ENCODE measurements at regions of chr4 and their contacts with region 1.

Region 1: GRCh38 chr4:87150498-87151261 is 69.7 kb downstream of the KLHL8 start:
- DNase-seq: peak in 1 of 2 experiments; percentile 64
- H3K4me3 ChIP-seq: no peak overlapping the region
- H3K27ac ChIP-seq: no peak overlapping the region
- H3K4me1 ChIP-seq: peaks cover 0 to 3% (median 1%) of the 10 kb centered on the region in 4 experiments; a peak in 2 of 7 replicates
- H3K27me3 ChIP-seq: no peaks in the 10 kb centered on the region
- CTCF ChIP-seq: peak in 2 of 3 experiments; percentile 60 to 82; a peak in 2 of 4 replicates
- EP300 ChIP-seq: no peak
- POLR2A ChIP-seq: no peak
- RAD21 ChIP-seq: peak; percentile 81

Region 2: DNA sequence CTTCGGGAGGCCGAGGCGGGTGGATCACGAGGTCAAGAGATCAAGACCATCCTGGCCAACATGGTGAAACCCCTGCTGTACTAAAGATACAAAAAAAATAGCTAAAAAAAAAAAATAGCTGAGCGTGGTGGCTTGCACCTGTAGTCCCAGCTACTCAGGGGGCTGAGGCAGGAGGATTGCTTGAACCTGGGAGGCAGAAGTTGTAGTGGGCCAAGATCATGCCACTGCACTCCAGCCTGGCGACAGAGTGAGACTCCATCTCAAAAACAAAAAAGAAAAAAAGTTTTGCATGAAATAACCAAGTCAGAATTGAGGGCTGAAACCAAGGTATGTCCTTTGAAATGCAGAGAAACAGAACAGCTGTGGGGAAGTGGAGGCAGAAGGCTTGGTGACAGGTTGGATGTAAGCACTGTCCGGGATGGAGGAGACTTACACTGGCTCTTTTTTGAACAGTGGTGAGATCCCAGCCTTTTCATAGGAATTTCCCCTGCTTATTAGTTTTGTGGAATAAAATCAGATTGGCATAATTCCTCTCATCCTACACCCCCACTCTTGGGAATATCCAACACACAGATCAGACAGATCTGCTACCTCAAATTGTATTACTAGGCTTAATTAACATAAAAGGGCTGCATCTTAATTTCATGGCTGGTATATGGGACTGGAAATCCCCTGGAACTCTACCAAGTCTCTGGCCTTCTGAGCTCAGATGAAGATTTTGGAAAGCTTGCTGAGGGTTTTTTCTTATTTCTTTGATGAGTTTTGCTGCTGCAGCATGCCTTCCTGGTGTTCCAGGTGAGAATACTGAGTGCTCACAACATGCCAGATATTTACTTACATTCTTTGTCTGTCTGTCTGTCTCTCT is 239.6 kb before region 1 on chr4:
- CTCF ChIA-PET with region 1: interaction called, 13 read pairs
- POLR2A ChIA-PET with region 1: no interaction called
- DNase-seq: no peak
- H3K4me3 ChIP-seq: no peak overlapping the region
- H3K27ac ChIP-seq: no peak overlapping the region
- H3K4me1 ChIP-seq: no peaks in the 10 kb centered on the region
- H3K27me3 ChIP-seq: no peaks in the 10 kb centered on the region
- CTCF ChIP-seq: no peak
- EP300 ChIP-seq: no peak
- POLR2A ChIP-seq: no peak
- RAD21 ChIP-seq: no peak

Region 3: GRCh38 chr4:87053802-87054767 is 96.6 kb before region 1 on chr4:
- CTCF ChIA-PET with region 1: no interaction called
- POLR2A ChIA-PET with region 1: no interaction called
- DNase-seq: no peak
- H3K4me3 ChIP-seq: no peak overlapping the region
- H3K27ac ChIP-seq: no peak overlapping the region
- H3K4me1 ChIP-seq: peaks cover 0 to 19% (median 10%) of the 10 kb centered on the region in 4 experiments; a peak in 3 of 7 replicates
- H3K27me3 ChIP-seq: no peaks in the 10 kb centered on the region
- CTCF ChIP-seq: no peak
- EP300 ChIP-seq: no peak
- POLR2A ChIP-seq: no peak
- RAD21 ChIP-seq: no peak

Region 4: DNA sequence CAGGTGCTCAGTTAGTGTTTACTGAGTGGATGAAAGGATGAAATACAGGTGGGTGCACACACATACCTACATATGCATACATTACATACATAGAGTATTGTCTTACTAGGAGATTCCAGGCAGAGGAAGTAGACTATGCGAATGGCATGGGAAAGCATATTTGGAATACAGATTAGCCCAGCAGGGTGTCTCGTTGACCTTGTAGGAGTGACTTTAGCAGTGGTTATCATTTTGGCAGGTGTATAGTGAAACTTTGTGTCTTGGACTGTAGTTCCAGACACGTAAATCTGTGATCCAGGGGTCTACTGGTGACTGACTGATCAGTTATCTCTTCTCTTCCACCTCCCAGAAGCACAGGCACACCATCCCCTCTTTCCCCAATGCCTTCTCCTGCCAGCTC is 16.6 kb before region 1 on chr4:
- CTCF ChIA-PET with region 1: interaction called, 11 read pairs
- POLR2A ChIA-PET with region 1: interaction called, 3 read pairs
- DNase-seq: no peak
- H3K4me3 ChIP-seq: no peak overlapping the region
- H3K27ac ChIP-seq: no peak overlapping the region
- H3K4me1 ChIP-seq: no peaks in the 10 kb centered on the region
- H3K27me3 ChIP-seq: no peaks in the 10 kb centered on the region
- CTCF ChIP-seq: no peak
- EP300 ChIP-seq: no peak
- POLR2A ChIP-seq: 0 out of 3 replicates have a peak, but pooled peaks of 1 of the 2 experiments have one; percentile 11
- RAD21 ChIP-seq: no peak

Region 5: DNA sequence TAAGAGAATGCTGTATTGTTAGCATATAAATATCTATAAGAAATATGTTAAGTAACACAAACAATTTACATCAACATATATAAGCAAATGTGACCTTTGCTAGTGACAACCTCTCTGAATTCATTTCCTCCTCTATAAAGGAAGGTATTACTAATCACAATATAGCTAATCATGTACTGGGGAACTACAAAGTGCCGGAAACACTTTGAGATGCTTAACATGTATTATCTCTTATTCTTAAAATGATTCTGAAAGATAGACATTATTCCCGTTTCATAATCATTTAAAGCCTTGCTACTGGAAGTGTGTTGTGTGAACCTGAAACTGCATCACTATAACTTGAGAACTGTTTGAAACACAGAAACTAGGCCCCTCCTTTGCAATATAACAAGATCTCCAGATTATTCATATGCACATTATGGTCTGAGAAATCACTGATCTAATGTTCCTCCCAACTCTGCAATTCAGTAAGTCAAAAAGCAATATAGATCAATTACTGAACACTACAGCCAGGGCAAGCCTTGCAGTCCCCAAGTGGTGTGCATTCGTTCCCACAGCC is 15.7 kb after region 1 on chr4:
- CTCF ChIA-PET with region 1: interaction called, 15 read pairs
- POLR2A ChIA-PET with region 1: no interaction called
- DNase-seq: no peak
- H3K4me3 ChIP-seq: no peak overlapping the region
- H3K27ac ChIP-seq: no peak overlapping the region
- H3K4me1 ChIP-seq: no peaks in the 10 kb centered on the region; a peak in 1 of 7 replicates
- H3K27me3 ChIP-seq: no peaks in the 10 kb centered on the region
- CTCF ChIP-seq: no peak
- EP300 ChIP-seq: no peak
- POLR2A ChIP-seq: no peak
- RAD21 ChIP-seq: no peak

Region 6: GRCh38 chr4:87220094-87220822 is 69.6 kb after region 1 on chr4 and contains the start of gene KLHL8:
- CTCF ChIA-PET with region 1: interaction called, 19 read pairs
- POLR2A ChIA-PET with region 1: interaction called, 5 read pairs
- DNase-seq: peak; percentile 39 to 92
- H3K4me3 ChIP-seq: peak within 1 kb of the TSS; percentile 87 to 100 (median 98)
- H3K27ac ChIP-seq: peak within 1 kb of the TSS; percentile 93
- H3K4me1 ChIP-seq: peaks cover 0 to 2% (median under 1%) of the 10 kb centered on the region in 4 experiments; a peak in 3 of 7 replicates
- H3K27me3 ChIP-seq: no peaks in the 10 kb centered on the region
- CTCF ChIP-seq: no peak
- EP300 ChIP-seq: peak in 1 of 2 experiments; percentile 31; a peak in 1 of 3 replicates
- POLR2A ChIP-seq: peak; percentile 88 to 94
- RAD21 ChIP-seq: no peak
- total RNA-seq, gene KLHL8: 6.9 and 8.1 TPM in 2 replicates

Region 7: DNA sequence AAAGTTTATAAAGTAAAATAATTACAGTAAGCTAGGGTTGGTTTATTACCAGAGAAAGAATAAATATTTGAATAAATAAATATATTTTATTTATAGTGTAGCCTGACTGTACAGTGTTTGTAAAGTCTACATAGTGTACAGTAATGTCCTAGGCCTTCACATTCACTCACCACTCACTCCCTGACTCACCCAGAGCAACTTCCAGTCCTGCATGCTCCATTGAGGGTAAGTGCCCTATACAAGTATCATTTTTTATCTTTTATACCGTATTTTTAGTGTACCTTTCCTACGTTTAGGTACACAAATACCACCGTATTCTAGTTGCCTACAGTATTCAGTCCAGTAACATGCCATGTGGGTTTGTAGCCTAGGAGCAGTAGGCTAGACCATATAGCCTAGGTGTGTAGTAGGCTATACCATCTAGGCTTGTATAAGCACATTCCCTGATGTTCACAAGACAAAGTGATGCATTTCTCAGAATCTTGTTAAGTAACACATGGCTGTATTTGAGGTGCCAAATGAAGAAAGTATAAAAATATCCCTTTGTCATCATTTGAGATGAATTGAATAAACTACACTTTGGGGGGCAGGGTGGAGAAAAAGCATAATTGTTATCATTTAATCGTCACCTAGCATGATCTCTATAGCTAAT is 84.5 kb after region 1 on chr4:
- CTCF ChIA-PET with region 1: interaction called, 40 read pairs
- POLR2A ChIA-PET with region 1: interaction called, 3 read pairs
- DNase-seq: no peak
- H3K4me3 ChIP-seq: peak overlapping the region in 1 of 4 experiments; percentile 48; a peak in 1 of 8 replicates
- H3K27ac ChIP-seq: no peak overlapping the region
- H3K4me1 ChIP-seq: no peaks in the 10 kb centered on the region
- H3K27me3 ChIP-seq: peaks cover 0 to 1% (median 0%) of the 10 kb centered on the region in 4 experiments; a peak in 1 of 7 replicates
- CTCF ChIP-seq: no peak
- EP300 ChIP-seq: no peak
- POLR2A ChIP-seq: no peak
- RAD21 ChIP-seq: no peak